B cell (primary cell): ENCODE measurements at regions of chr17 and their contacts with region 1.

Region 1: GRCh38 chr17:8857919-8858318 is 9.6 kb downstream of the PIK3R6 start:
- DNase-seq: peak; percentile 61
- ATAC-seq: peak; percentile 77
- H3K4me3 ChIP-seq: peak overlapping the region in 1 of 5 experiments; percentile 21
- H3K4me3 Mint-ChIP-seq: peak overlapping the region; percentile 82
- H3K27ac ChIP-seq: peak overlapping the region in 1 of 2 donors; percentile 48
- H3K27ac Mint-ChIP-seq: peak overlapping the region; percentile 83
- H3K4me1 ChIP-seq: peaks cover 29 to 38% of the 10 kb centered on the region in 2 donors
- H3K4me1 Mint-ChIP-seq: peaks cover 48% of the 10 kb centered on the region
- H3K27me3 ChIP-seq: no peaks in the 10 kb centered on the region
- H3K27me3 Mint-ChIP-seq: no peaks in the 10 kb centered on the region
- CTCF ChIP-seq: no peak

Region 2: GRCh38 chr17:8806926-8807550 is 50.9 kb before region 1 on chr17:
- CTCF ChIA-PET with region 1: interaction called, 7 read pairs
- POLR2A ChIA-PET with region 1: interaction called, 7 read pairs
- intact Hi-C with region 1: loop called (anchors 1 kb)
- DNase-seq: peak; percentile 88
- ATAC-seq: peak; percentile 89
- H3K4me3 ChIP-seq: peak overlapping the region in 2 of 5 experiments; percentile 10 to 26
- H3K4me3 Mint-ChIP-seq: peak overlapping the region; percentile 76
- H3K27ac ChIP-seq: peak overlapping the region; percentile 95 to 97
- H3K27ac Mint-ChIP-seq: peak overlapping the region; percentile 95
- H3K4me1 ChIP-seq: peaks cover 36 to 42% of the 10 kb centered on the region in 2 donors
- H3K4me1 Mint-ChIP-seq: peaks cover 44% of the 10 kb centered on the region
- H3K27me3 ChIP-seq: no peaks in the 10 kb centered on the region
- H3K27me3 Mint-ChIP-seq: peaks cover 4% of the 10 kb centered on the region
- CTCF ChIP-seq: no peak

Region 3: GRCh38 chr17:8900626-8901585 is 43.0 kb after region 1 on chr17:
- CTCF ChIA-PET with region 1: interaction called, 4 read pairs
- POLR2A ChIA-PET with region 1: no interaction called
- intact Hi-C with region 1: loop called (anchors 1 kb)
- DNase-seq: peak; percentile 60
- ATAC-seq: peak; percentile 22
- H3K4me3 ChIP-seq: peak overlapping the region in 1 of 5 experiments; percentile 6
- H3K4me3 Mint-ChIP-seq: peak overlapping the region; percentile 63
- H3K27ac ChIP-seq: peak overlapping the region; percentile 56 to 81
- H3K27ac Mint-ChIP-seq: peak overlapping the region; percentile 86
- H3K4me1 ChIP-seq: peaks cover 48 to 54% of the 10 kb centered on the region in 2 donors
- H3K4me1 Mint-ChIP-seq: peaks cover 60% of the 10 kb centered on the region
- H3K27me3 ChIP-seq: no peaks in the 10 kb centered on the region
- H3K27me3 Mint-ChIP-seq: no peaks in the 10 kb centered on the region
- CTCF ChIP-seq: no peak